IMR-90 (cell line): ENCODE measurements at regions of chr11 and their contacts with region 1.

Region 1: DNA sequence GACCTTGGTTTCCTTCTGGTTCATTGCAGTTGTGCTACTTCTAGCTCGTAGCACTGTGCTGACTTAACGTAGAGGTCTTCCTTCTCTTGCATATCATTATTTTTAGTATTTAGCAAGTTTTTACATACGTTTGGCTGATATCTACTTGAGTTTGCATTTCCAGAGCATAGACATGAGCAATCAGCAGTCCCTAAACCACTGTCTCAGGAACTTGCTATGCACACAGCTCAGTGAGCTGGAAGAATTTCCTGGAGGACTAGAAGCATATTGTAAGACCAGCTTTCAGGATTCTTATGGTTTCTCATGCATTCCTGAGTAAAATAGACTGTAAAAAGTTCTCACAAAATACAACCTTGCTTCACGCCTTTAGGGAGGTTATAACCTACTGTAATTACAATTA is 226.7 kb upstream of the PDGFD start:
- DNase-seq: peak; percentile 25
- ATAC-seq: no peak
- H3K4me3 ChIP-seq: no peak overlapping the region
- H3K27ac ChIP-seq: no peak overlapping the region
- H3K4me1 ChIP-seq: no peaks in the 10 kb centered on the region
- H3K27me3 ChIP-seq: no peaks in the 10 kb centered on the region
- CTCF ChIP-seq: no peak
- POLR2A ChIP-seq: no peak
- RAD21 ChIP-seq: no peak

Region 2: GRCh38 chr11:104015649-104016415 is 374.8 kb before region 1 on chr11:
- CTCF ChIA-PET with region 1: no interaction called
- POLR2A ChIA-PET with region 1: no interaction called
- dilution Hi-C with region 1: no loop called
- in situ Hi-C with region 1: no loop called
- intact Hi-C with region 1: no loop called
- DNase-seq: no peak
- ATAC-seq: no peak
- H3K4me3 ChIP-seq: no peak overlapping the region
- H3K27ac ChIP-seq: no peak overlapping the region
- H3K4me1 ChIP-seq: no peaks in the 10 kb centered on the region
- H3K27me3 ChIP-seq: no peaks in the 10 kb centered on the region
- CTCF ChIP-seq: no peak
- POLR2A ChIP-seq: no peak
- RAD21 ChIP-seq: no peak

Region 3: GRCh38 chr11:104402812-104403521 is 12.3 kb after region 1 on chr11:
- CTCF ChIA-PET with region 1: interaction called, 3 read pairs
- POLR2A ChIA-PET with region 1: no interaction called
- dilution Hi-C with region 1: no loop called
- in situ Hi-C with region 1: no loop called
- intact Hi-C with region 1: loop called (anchors 1 kb)
- DNase-seq: no peak
- ATAC-seq: no peak
- H3K4me3 ChIP-seq: no peak overlapping the region
- H3K27ac ChIP-seq: no peak overlapping the region
- H3K4me1 ChIP-seq: no peaks in the 10 kb centered on the region
- H3K27me3 ChIP-seq: no peaks in the 10 kb centered on the region
- CTCF ChIP-seq: no peak
- POLR2A ChIP-seq: no peak
- RAD21 ChIP-seq: no peak